Prostate gland (tissue), 2 donors: ENCODE measurements at regions of chr20 and their contacts with region 1.

Region 1: GRCh38 chr20:37527638-37528441 is at the start of gene BLCAP:
- DNase-seq: peak; percentile 85
- H3K4me3 ChIP-seq: peak within 1 kb of the TSS; percentile 82 to 92
- H3K27ac ChIP-seq: peak within 1 kb of the TSS; percentile 93 to 97
- H3K4me1 ChIP-seq: peaks cover 5% of the 10 kb centered on the region
- H3K27me3 ChIP-seq: no peaks in the 10 kb centered on the region
- CTCF ChIP-seq: no peak
- POLR2A ChIP-seq: peak; percentile 86
- total RNA-seq, gene BLCAP: 93.0 to 101 TPM

Region 2: DNA sequence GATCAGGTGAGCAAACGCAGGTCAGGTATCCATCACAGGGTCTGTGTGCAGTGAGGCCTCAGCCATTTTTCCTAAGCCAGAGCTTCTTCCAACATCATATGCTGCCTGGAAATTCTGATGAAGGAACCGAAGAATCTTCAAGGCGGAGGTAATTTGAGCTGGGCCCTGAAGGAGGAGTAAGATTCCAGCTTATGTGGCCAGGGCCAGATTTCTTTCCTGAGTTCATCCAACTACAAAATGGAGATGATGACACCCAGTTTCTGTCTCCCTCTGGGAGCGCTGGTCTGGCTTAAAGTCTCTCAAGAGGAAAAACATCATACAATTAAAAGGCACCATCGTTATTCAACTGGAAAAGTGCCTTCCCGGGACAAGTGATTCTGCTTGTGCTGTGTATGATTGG is 245.3 kb before region 1 on chr20:
- intact Hi-C with region 1: loop called (anchors 5 kb)
- DNase-seq: no peak
- H3K4me3 ChIP-seq: no peak overlapping the region
- H3K27ac ChIP-seq: no peak overlapping the region
- H3K4me1 ChIP-seq: no peaks in the 10 kb centered on the region
- H3K27me3 ChIP-seq: no peaks in the 10 kb centered on the region
- CTCF ChIP-seq: peak in 2 of 4 experiments; percentile 55 to 57
- POLR2A ChIP-seq: no peak

Region 3: GRCh38 chr20:37396416-37397075 is 131.3 kb before region 1 on chr20:
- intact Hi-C with region 1: loop called (anchors 5 kb)
- DNase-seq: no peak
- H3K4me3 ChIP-seq: no peak overlapping the region
- H3K27ac ChIP-seq: no peak overlapping the region
- H3K4me1 ChIP-seq: no peaks in the 10 kb centered on the region
- H3K27me3 ChIP-seq: no peaks in the 10 kb centered on the region
- CTCF ChIP-seq: no peak
- POLR2A ChIP-seq: no peak

Region 4: DNA sequence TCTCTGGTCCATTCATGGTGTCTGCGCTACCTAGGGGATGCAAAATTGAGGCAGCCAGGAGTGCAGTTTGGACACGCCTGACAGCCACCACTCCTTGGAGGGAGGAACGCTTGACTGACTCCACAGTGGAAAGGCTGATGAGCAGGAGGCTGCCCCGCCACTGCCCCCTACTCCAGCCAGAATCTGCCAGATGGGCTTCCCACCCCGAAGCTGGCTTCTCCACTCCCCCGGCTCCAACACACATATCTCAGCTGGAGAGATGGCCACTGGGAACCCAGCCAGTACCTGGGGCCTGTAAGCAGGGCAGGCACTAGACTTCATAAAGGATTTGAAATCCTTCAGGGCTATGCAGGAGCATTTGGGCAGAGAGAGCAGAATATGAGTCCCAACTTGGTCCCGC is 51.3 kb after region 1 on chr20:
- intact Hi-C with region 1: no loop called
- DNase-seq: no peak
- H3K4me3 ChIP-seq: no peak overlapping the region
- H3K27ac ChIP-seq: no peak overlapping the region
- H3K4me1 ChIP-seq: no peaks in the 10 kb centered on the region
- H3K27me3 ChIP-seq: peaks cover 2% of the 10 kb centered on the region
- CTCF ChIP-seq: no peak
- POLR2A ChIP-seq: no peak